Endothelial cell of umbilical vein (primary cell): ENCODE measurements at regions of chr2 and their contacts with region 1.

Region 1: DNA sequence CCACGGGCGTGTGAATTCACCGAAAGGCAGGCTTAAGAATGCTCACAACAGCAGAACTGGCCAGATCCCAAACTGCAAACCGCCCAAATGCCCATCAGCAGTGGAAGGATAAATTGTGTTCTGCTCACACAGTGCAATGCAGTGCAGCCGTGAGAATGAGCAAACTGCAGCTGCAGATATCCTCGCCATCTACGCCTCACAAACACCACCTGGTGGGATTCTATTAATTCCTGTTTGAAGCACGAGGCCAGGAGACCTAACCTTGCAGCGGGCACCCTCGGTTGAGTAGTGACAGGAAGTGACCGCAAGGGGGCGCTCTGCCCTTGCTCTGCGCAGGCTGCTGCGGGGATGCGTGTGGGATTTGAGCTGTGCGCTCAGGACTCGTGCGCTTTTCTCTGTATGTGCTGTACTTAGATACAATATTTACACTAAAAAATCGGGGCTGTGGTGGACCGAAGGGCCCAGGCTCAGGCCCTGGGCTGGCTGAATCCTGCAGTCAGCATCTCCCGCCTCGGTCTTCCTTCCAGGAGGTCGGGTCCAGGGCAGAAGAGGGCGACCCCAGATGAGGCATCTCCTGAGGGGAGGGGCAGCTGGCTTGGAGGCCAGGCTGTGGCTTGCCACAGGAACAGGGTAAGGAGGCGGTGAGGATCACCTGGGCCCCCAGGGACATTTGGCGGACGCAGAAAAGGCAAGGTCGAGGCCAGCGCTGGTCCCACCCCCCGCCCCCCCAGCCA is 19.8 kb upstream of the PDIA6 start:
- DNase-seq: peak; percentile 79
- H3K4me3 ChIP-seq: no peak overlapping the region
- H3K27ac ChIP-seq: no peak overlapping the region
- H3K4me1 ChIP-seq: peaks cover 11% of the 10 kb centered on the region
- H3K27me3 ChIP-seq: peaks cover 0 to 3% of the 10 kb centered on the region in 2 experiments
- CTCF ChIP-seq: peak; percentile 93 to 98
- POLR2A ChIP-seq: no peak

Region 2: GRCh38 chr2:10812362-10813162 is 19.8 kb before region 1 on chr2 and contains the start of gene PDIA6:
- CTCF ChIA-PET with region 1: interaction called, 38 read pairs
- POLR2A ChIA-PET with region 1: no interaction called
- dilution Hi-C with region 1: no loop called
- intact Hi-C with region 1: no loop called
- DNase-seq: peak; percentile 98
- H3K4me3 ChIP-seq: peak within 1 kb of the TSS; percentile 53 to 95 (median 67)
- H3K27ac ChIP-seq: peak within 1 kb of the TSS; percentile 64
- H3K4me1 ChIP-seq: peaks cover 27% of the 10 kb centered on the region
- H3K27me3 ChIP-seq: peaks cover 0 to 2% of the 10 kb centered on the region in 2 experiments
- CTCF ChIP-seq: no peak
- POLR2A ChIP-seq: peak; percentile 72
- total RNA-seq, gene PDIA6: 424 and 433 TPM in 2 replicates

Region 3: GRCh38 chr2:10844097-10844496 is 11.7 kb after region 1 on chr2:
- CTCF ChIA-PET with region 1: interaction called, 31 read pairs
- POLR2A ChIA-PET with region 1: no interaction called
- dilution Hi-C with region 1: no loop called
- intact Hi-C with region 1: no loop called
- DNase-seq: peak; percentile 10
- H3K4me3 ChIP-seq: no peak overlapping the region
- H3K27ac ChIP-seq: no peak overlapping the region
- H3K4me1 ChIP-seq: no peaks in the 10 kb centered on the region
- H3K27me3 ChIP-seq: peaks cover 0 to 1% of the 10 kb centered on the region in 2 experiments
- CTCF ChIP-seq: no peak
- POLR2A ChIP-seq: no peak

Region 4: DNA sequence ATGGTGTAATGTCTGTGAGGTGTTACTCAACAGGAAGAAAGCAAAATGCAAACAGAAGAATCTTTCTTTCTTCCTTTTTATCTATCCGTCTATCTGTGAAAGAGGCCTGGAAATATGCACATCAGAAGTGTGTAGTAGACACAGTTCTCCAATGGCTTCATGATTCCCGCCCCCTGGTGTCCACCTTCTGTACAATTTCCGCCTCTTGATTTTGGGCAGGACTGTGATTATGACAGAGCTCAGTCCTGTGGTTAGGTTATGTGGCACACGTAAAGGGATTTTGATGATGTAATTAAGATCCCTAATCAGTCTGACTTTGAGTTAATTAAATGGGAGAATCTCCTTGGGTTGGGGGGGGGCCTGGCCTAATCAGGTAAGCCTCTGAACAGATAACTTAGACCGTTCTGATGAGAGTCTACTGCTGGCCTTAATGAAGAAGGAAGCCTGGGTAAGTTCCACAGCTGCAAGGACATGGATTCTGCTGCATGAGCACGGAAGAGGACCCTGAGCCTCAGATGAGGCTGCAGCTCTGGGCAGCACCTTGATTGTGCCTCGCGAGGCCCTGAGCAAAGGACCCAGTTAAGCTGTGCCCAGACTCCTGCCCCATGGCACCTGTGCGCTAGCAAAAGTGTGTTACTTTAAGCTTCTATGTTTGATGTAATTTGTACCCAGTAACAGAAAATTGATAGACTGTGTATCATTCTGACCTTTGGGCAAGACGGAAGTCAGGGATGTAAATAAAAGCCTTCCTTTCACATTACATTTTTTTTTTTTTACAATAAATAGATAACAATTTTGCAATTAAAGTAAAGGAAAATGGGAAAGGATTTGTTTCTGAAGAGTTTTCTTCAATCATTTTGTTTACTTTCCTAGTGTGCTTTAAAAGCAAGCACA is 68.1 kb after region 1 on chr2:
- CTCF ChIA-PET with region 1: interaction called, 12 read pairs
- POLR2A ChIA-PET with region 1: no interaction called
- dilution Hi-C with region 1: no loop called
- intact Hi-C with region 1: loop called (anchors 2 kb)
- DNase-seq: no peak
- H3K4me3 ChIP-seq: no peak overlapping the region
- H3K27ac ChIP-seq: no peak overlapping the region
- H3K4me1 ChIP-seq: peaks cover 6% of the 10 kb centered on the region
- H3K27me3 ChIP-seq: peaks cover 0 to 2% of the 10 kb centered on the region in 2 experiments
- CTCF ChIP-seq: no peak
- POLR2A ChIP-seq: no peak

Region 5: GRCh38 chr2:10911261-10912075 is 79.1 kb after region 1 on chr2 and contains the start of gene KCNF1:
- CTCF ChIA-PET with region 1: interaction called, 11 read pairs
- POLR2A ChIA-PET with region 1: no interaction called
- dilution Hi-C with region 1: no loop called
- intact Hi-C with region 1: loop called (anchors 1 kb)
- DNase-seq: peak; percentile 66
- H3K4me3 ChIP-seq: peak within 1 kb of the TSS; percentile 9 to 25 (median 17)
- H3K27ac ChIP-seq: no peak within 1 kb of the TSS
- H3K4me1 ChIP-seq: peaks cover 5% of the 10 kb centered on the region
- H3K27me3 ChIP-seq: peaks cover 25 to 27% of the 10 kb centered on the region in 2 experiments
- CTCF ChIP-seq: peak; percentile 20 to 32
- POLR2A ChIP-seq: no peak
- total RNA-seq, gene KCNF1: 0.28 and 0.42 TPM in 2 replicates

Region 6: DNA sequence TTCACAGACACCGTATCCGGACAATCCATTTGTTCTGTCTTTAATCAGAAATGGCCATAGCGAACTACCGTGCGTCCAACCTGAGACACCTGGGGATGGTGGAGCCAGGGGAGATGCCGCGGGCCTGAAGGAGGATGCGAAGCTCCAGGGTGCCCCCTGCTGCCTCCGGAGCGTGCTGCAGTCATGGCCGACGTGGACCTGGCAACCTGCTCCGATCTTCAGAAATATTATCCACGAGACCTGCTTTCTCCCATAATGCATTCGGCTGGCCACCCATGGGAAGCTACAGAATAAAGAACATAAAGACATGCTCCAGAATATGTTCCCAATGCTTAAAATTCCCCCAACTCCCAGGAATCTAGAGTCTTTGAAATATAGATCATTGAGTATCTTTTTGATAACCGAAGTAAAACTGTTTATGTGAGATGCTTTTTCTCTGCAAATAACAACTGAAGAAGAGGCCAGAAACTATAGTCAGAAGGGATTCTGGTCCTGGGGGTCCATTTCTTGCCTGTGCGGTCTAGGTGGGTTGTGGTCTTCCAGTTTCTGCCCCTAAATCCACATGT is 292.2 kb after region 1 on chr2:
- CTCF ChIA-PET with region 1: interaction called, 738 read pairs
- POLR2A ChIA-PET with region 1: no interaction called
- dilution Hi-C with region 1: no loop called
- intact Hi-C with region 1: loop called (anchors 1 kb)
- DNase-seq: peak; percentile 52
- H3K4me3 ChIP-seq: no peak overlapping the region
- H3K27ac ChIP-seq: no peak overlapping the region
- H3K4me1 ChIP-seq: peaks cover 15% of the 10 kb centered on the region
- H3K27me3 ChIP-seq: peaks cover 0 to 1% of the 10 kb centered on the region in 2 experiments
- CTCF ChIP-seq: peak; percentile 85 to 94
- POLR2A ChIP-seq: no peak

Region 7: GRCh38 chr2:11446733-11447248 is 614.4 kb after region 1 on chr2:
- CTCF ChIA-PET with region 1: interaction called, 14 read pairs
- POLR2A ChIA-PET with region 1: no interaction called
- dilution Hi-C with region 1: no loop called
- intact Hi-C with region 1: loop called (anchors 5 kb)
- DNase-seq: peak; percentile 71
- H3K4me3 ChIP-seq: no peak overlapping the region
- H3K27ac ChIP-seq: no peak overlapping the region
- H3K4me1 ChIP-seq: no peaks in the 10 kb centered on the region
- H3K27me3 ChIP-seq: no peaks in the 10 kb centered on the region
- CTCF ChIP-seq: peak; percentile 72 to 75
- POLR2A ChIP-seq: no peak